Panc1 (cell line): ENCODE measurements at regions of chr22 and their contacts with region 1.

Region 1: GRCh38 chr22:32474635-32475467 is at the start of gene FBXO7:
- DNase-seq: no peak
- ATAC-seq: peak; percentile 91
- H3K4me3 ChIP-seq: peak within 1 kb of the TSS; percentile 78 to 86
- H3K27ac ChIP-seq: peak within 1 kb of the TSS; percentile 86
- H3K4me1 ChIP-seq: peaks cover 10% of the 10 kb centered on the region
- H3K27me3 ChIP-seq: no peaks in the 10 kb centered on the region
- CTCF ChIP-seq: peak; percentile 35
- total RNA-seq, gene FBXO7: 67.8 TPM

Region 2: DNA sequence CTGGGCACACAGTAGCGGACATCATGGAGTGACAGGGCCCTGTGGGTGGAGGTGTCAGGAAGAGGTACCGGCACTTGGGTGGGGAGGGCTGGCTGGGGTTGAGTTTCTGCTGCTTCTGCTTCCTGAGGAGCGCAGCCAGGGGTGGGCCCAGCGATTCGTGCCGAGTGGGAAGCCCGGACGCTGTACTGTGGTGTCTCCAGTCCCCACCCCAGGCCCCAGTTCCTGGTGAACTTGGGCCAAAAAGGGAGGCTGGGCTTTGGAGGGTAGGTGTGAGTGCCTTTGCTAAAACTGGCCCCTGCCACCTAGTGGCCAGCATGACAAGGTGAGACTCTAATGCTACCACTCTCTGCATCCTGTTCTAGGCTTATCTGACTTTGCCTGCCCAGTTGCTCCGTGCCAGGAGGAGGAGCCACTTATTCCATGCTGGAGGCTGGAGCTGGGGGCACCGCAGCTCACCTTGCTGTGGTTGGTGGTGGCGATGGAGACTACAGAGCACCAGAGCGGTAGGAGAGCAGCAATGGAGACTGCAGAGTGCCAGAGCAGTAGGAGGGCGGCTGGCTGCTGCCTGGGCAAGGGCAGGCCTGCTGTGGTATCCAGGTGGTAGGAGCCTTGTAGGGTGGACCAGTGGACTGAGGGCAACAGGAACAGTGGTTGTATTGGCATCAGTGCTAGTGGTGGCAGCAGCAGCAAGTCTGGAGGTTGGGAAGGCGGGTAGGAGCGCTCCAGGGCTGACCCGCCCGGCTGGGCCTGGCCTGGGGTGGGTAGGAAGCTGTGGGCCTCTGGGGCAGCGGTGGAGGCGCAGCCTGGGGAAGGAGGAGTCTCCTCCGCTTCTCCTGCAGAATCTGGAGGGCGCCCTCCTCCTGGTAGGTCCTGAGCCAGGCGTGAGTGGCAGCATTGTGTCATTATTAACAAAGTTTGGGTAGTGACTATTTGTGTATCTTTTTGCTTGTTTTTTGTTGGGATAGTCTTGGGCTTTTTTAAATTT is 267.8 kb before region 1 on chr22:
- CTCF ChIA-PET with region 1: no interaction called
- POLR2A ChIA-PET with region 1: no interaction called
- in situ Hi-C with region 1: no loop called
- intact Hi-C with region 1: loop called (anchors 5 kb)
- DNase-seq: peak; percentile 27
- ATAC-seq: peak; percentile 67
- H3K4me3 ChIP-seq: peak overlapping the region in 1 of 2 experiments; percentile 2; a peak in 1 of 4 replicates
- H3K27ac ChIP-seq: no peak overlapping the region
- H3K4me1 ChIP-seq: no peaks in the 10 kb centered on the region
- H3K27me3 ChIP-seq: no peaks in the 10 kb centered on the region
- CTCF ChIP-seq: peak; percentile 83

Region 3: GRCh38 chr22:32411829-32412592 is 62.8 kb before region 1 on chr22 and contains the start of gene RTCB:
- CTCF ChIA-PET with region 1: interaction called, 4 read pairs
- POLR2A ChIA-PET with region 1: no interaction called
- in situ Hi-C with region 1: no loop called
- intact Hi-C with region 1: loop called (anchors 2 kb)
- DNase-seq: peak; percentile 75
- ATAC-seq: peak; percentile 94
- H3K4me3 ChIP-seq: peak within 1 kb of the TSS; percentile 96 to 99
- H3K27ac ChIP-seq: peak within 1 kb of the TSS; percentile 86
- H3K4me1 ChIP-seq: no peaks in the 10 kb centered on the region
- H3K27me3 ChIP-seq: no peaks in the 10 kb centered on the region
- CTCF ChIP-seq: no peak
- total RNA-seq, gene RTCB: 55.9 TPM

Region 4: GRCh38 chr22:32489377-32489776 is 14.5 kb after region 1 on chr22:
- CTCF ChIA-PET with region 1: no interaction called
- POLR2A ChIA-PET with region 1: no interaction called
- in situ Hi-C with region 1: no loop called
- intact Hi-C with region 1: no loop called
- DNase-seq: no peak
- ATAC-seq: no peak
- H3K4me3 ChIP-seq: no peak overlapping the region
- H3K27ac ChIP-seq: no peak overlapping the region
- H3K4me1 ChIP-seq: no peaks in the 10 kb centered on the region
- H3K27me3 ChIP-seq: no peaks in the 10 kb centered on the region
- CTCF ChIP-seq: no peak

Region 5: DNA sequence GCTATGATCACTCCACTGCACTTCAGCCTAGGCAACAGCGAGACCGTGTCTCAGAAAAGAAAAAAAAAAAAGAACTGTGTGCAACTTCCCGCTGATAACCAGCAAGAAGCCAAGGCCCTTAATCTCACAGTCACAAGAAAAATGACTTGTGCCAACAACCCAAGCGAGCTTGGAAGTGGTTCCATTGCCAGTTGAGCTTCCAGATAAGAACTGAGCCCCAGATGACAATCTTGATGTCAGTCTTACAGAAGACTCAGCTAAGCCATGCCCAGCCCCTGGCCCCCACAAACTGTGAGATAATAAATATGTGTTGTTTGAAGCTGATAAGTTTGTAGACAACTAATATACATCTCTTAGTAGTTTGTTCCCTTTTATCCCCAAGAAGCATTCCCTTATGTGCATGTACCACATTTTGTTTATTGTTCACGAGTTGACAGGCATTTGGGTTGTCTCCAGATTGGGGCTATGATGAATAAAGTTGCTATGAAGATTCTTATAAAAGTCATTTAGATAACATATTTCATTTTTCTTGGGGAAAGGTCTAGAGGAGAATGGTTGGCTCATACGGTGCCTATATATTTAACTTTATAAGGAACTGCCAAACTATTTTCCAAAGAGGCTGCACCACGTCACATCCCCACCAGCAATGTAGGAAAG is 412.6 kb after region 1 on chr22:
- CTCF ChIA-PET with region 1: interaction called, 12 read pairs
- POLR2A ChIA-PET with region 1: no interaction called
- in situ Hi-C with region 1: no loop called
- intact Hi-C with region 1: no loop called
- DNase-seq: no peak
- ATAC-seq: no peak
- H3K4me3 ChIP-seq: no peak overlapping the region
- H3K27ac ChIP-seq: no peak overlapping the region
- H3K4me1 ChIP-seq: no peaks in the 10 kb centered on the region
- H3K27me3 ChIP-seq: no peaks in the 10 kb centered on the region
- CTCF ChIP-seq: no peak